Activated CD8-positive, alpha-beta memory T cell treated with anti-CD3 and anti-CD28 coated beads, Interleukin-2, amount 10 ng/mL, durations not matched to agents 7 days and 5 days (primary cell): ENCODE measurements at regions of chrX and their contacts with region 1.

Region 1: GRCh38 chrX:43750248-43750676 is 94.2 kb downstream of the MAOA start:
- DNase-seq: peak; percentile 57
- ATAC-seq: peak; percentile 68
- H3K4me3 Mint-ChIP-seq: no peak overlapping the region
- H3K27ac Mint-ChIP-seq: no peak overlapping the region
- H3K4me1 Mint-ChIP-seq: peaks cover 16% of the 10 kb centered on the region
- H3K27me3 Mint-ChIP-seq: no peaks in the 10 kb centered on the region

Region 2: GRCh38 chrX:43557792-43558191 is 192.5 kb before region 1 on chrX:
- CTCF ChIA-PET with region 1: interaction called, 14 read pairs
- DNase-seq: peak; percentile 68
- ATAC-seq: no peak
- H3K4me3 Mint-ChIP-seq: no peak overlapping the region
- H3K27ac Mint-ChIP-seq: no peak overlapping the region
- H3K4me1 Mint-ChIP-seq: peaks cover 3% of the 10 kb centered on the region
- H3K27me3 Mint-ChIP-seq: no peaks in the 10 kb centered on the region

Region 3: GRCh38 chrX:43718546-43719320 is 31.5 kb before region 1 on chrX:
- CTCF ChIA-PET with region 1: no interaction called
- DNase-seq: no peak
- ATAC-seq: no peak
- H3K4me3 Mint-ChIP-seq: no peak overlapping the region
- H3K27ac Mint-ChIP-seq: no peak overlapping the region
- H3K4me1 Mint-ChIP-seq: no peaks in the 10 kb centered on the region
- H3K27me3 Mint-ChIP-seq: no peaks in the 10 kb centered on the region

Region 4: GRCh38 chrX:43773298-43773697 is 23.0 kb after region 1 on chrX:
- CTCF ChIA-PET with region 1: no interaction called
- DNase-seq: no peak
- ATAC-seq: no peak
- H3K4me3 Mint-ChIP-seq: no peak overlapping the region
- H3K27ac Mint-ChIP-seq: no peak overlapping the region
- H3K4me1 Mint-ChIP-seq: no peaks in the 10 kb centered on the region
- H3K27me3 Mint-ChIP-seq: peaks cover 2% of the 10 kb centered on the region